MCF 10A (cell line): ENCODE measurements at regions of chr9 and their contacts with region 1.

Region 1: GRCh38 chr9:105244003-105244733 is at the start of gene SLC44A1:
- DNase-seq: peak; percentile 96
- H3K4me3 Mint-ChIP-seq: peak within 1 kb of the TSS; percentile 83
- H3K27ac Mint-ChIP-seq: peak within 1 kb of the TSS; percentile 79
- H3K4me1 Mint-ChIP-seq: peaks cover 6% of the 10 kb centered on the region
- H3K27me3 Mint-ChIP-seq: peaks cover 27% of the 10 kb centered on the region
- CTCF ChIP-seq: no peak
- total RNA-seq, gene SLC44A1: 15.2 and 15.9 TPM in 2 replicates

Region 2: DNA sequence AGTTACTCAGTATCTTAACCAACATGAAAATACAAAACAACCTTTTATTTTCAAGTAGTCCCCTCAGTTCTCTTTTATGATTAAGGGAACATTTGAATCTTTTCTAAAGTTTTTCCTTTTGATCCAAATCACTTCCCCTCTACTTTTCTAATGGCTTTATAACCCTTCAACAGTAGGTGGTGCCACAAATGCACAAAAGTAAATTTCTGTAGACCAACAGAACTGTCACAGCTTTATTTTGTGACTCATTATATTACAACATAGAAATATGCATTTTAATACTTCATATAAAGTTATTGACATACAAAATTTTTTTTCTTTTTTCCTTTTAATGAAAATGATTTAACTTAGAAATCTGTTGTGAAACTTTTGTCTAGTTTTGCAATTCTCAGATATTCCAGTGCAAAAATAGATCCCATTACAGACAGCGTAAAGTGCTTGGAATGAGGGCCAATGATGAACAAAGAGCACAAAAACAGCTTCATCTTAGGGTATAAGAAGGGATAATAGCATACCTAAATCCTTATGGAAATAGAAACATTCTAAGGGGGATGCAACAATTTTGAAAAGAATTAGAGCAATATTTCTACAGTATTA is 463.3 kb before region 1 on chr9:
- CTCF ChIA-PET with region 1: no interaction called
- POLR2A ChIA-PET with region 1: interaction called, 4 read pairs
- intact Hi-C with region 1: loop called (anchors 10 kb)
- DNase-seq: peak; percentile 71
- H3K4me3 Mint-ChIP-seq: no peak overlapping the region
- H3K27ac Mint-ChIP-seq: no peak overlapping the region
- H3K4me1 Mint-ChIP-seq: no peaks in the 10 kb centered on the region
- H3K27me3 Mint-ChIP-seq: no peaks in the 10 kb centered on the region
- CTCF ChIP-seq: peak; percentile 45

Region 3: DNA sequence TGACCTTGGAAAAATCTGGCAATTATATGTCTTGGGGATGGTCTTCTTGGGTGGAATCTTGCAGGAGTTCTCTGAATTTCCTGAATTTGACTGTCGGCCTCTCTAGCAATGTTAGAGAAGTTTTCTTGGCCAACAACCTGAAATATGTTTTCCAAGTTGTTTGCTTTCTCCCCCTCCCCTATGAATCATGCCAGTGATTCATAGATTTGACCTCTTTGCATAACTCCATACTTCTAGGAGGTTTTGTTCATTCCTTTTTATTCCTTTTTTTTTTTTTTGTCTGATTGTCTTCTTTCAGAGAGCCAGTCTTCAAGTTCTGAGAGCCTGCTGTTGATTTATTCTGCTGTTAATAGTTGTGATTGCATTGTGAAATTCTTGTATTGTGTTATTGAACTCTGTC is 56.4 kb before region 1 on chr9:
- CTCF ChIA-PET with region 1: interaction called, 6 read pairs
- POLR2A ChIA-PET with region 1: interaction called, 10 read pairs
- intact Hi-C with region 1: loop called (anchors 5 kb)
- DNase-seq: peak; percentile 88
- H3K4me3 Mint-ChIP-seq: peak overlapping the region; percentile 46
- H3K27ac Mint-ChIP-seq: peak overlapping the region; percentile 88
- H3K4me1 Mint-ChIP-seq: peaks cover 38% of the 10 kb centered on the region
- H3K27me3 Mint-ChIP-seq: no peaks in the 10 kb centered on the region
- CTCF ChIP-seq: no peak

Region 4: DNA sequence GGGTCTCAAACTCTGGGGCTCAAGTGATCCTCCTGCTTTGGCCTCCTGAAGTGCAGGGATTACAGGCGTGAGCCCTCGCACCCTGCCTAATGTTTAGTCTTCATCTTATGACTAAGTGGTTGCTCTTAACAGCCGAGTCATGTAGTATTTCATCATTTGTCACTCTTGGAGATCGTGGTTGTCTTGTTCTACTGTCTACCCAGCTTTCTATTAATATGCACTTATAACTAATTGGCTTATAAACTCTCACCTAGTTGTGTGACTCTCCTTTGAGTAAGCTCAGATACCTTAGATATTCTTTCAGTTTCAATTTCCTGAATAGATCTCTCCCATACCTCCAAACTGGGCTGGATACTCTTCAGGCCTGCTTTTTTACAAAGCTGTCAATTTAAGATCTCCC is 20.2 kb after region 1 on chr9:
- CTCF ChIA-PET with region 1: interaction called, 3 read pairs
- POLR2A ChIA-PET with region 1: interaction called, 15 read pairs
- intact Hi-C with region 1: no loop called
- DNase-seq: peak; percentile 53
- H3K4me3 Mint-ChIP-seq: no peak overlapping the region
- H3K27ac Mint-ChIP-seq: peak overlapping the region; percentile 6
- H3K4me1 Mint-ChIP-seq: peaks cover 16% of the 10 kb centered on the region
- H3K27me3 Mint-ChIP-seq: no peaks in the 10 kb centered on the region
- CTCF ChIP-seq: no peak

Region 5: GRCh38 chr9:105341434-105342144 is 97.4 kb after region 1 on chr9:
- CTCF ChIA-PET with region 1: interaction called, 3 read pairs
- POLR2A ChIA-PET with region 1: interaction called, 6 read pairs
- intact Hi-C with region 1: loop called (anchors 10 kb)
- DNase-seq: no peak
- H3K4me3 Mint-ChIP-seq: peak overlapping the region; percentile 5
- H3K27ac Mint-ChIP-seq: peak overlapping the region; percentile 4
- H3K4me1 Mint-ChIP-seq: peaks cover 6% of the 10 kb centered on the region
- H3K27me3 Mint-ChIP-seq: no peaks in the 10 kb centered on the region
- CTCF ChIP-seq: no peak

Region 6: DNA sequence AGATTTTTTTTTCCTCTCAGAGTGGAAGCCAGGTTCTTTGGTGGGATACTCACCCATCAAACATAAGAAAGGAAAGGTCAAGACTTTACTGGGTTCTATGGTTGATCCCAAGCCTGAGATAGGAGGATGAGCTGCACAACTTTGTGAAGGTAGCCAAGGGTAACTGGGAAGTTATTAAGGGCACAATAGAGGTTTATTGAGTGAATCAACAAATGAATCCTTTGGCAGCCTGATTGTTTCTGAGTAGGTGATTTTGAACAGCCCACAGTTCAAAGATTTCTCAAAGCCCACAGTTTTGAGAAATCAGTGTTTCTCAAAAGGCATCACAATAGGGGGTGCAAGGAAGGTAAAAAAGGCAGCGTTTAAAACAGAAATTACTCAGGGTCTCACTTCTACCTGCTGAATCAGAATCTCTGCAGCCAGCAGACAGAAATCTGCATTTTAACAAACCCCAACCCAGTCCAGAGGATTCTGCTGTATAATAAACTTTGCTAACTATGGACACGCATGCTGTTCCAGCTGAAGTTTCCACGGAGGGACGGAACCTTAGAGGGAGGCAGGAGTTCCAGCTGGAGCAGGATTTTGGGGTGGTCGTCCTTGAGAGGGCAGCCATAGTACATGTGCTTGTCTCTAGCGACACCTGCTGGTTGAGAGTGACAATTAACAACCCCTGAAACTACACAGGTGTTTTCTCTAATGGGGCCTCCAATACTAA is 170.9 kb after region 1 on chr9:
- CTCF ChIA-PET with region 1: interaction called, 38 read pairs
- POLR2A ChIA-PET with region 1: interaction called, 5 read pairs
- intact Hi-C with region 1: loop called (anchors 1 kb)
- DNase-seq: peak; percentile 73
- H3K4me3 Mint-ChIP-seq: no peak overlapping the region
- H3K27ac Mint-ChIP-seq: no peak overlapping the region
- H3K4me1 Mint-ChIP-seq: peaks cover 6% of the 10 kb centered on the region
- H3K27me3 Mint-ChIP-seq: no peaks in the 10 kb centered on the region
- CTCF ChIP-seq: peak; percentile 91